ENCODE measurements at regions of chr2 and their contacts with region 1.

Region 1: GRCh38 chr2:176892676-176893226 is 319.8 kb upstream of the HNRNPA3 start:
- DNase-seq: no peak
- ATAC-seq: no peak
- H3K4me3 ChIP-seq: no peak overlapping the region
- H3K4me3 Mint-ChIP-seq: no peak overlapping the region
- H3K27ac ChIP-seq: no peak overlapping the region
- H3K27ac Mint-ChIP-seq: no peak overlapping the region
- H3K4me1 ChIP-seq: no peaks in the 10 kb centered on the region
- H3K4me1 Mint-ChIP-seq: no peaks in the 10 kb centered on the region
- H3K27me3 ChIP-seq: no peaks in the 10 kb centered on the region
- H3K27me3 Mint-ChIP-seq: peaks cover 0 to 7% of the 10 kb centered on the region in 2 donors
- CTCF ChIP-seq: no peak

Region 2: GRCh38 chr2:176398243-176399073 is 494.3 kb before region 1 on chr2:
- intact Hi-C with region 1: loop called (anchors 10 kb)
- DNase-seq: no peak
- ATAC-seq: no peak
- H3K4me3 ChIP-seq: no peak overlapping the region
- H3K4me3 Mint-ChIP-seq: no peak overlapping the region
- H3K27ac ChIP-seq: no peak overlapping the region
- H3K27ac Mint-ChIP-seq: no peak overlapping the region
- H3K4me1 ChIP-seq: no peaks in the 10 kb centered on the region
- H3K4me1 Mint-ChIP-seq: no peaks in the 10 kb centered on the region
- H3K27me3 ChIP-seq: no peaks in the 10 kb centered on the region
- H3K27me3 Mint-ChIP-seq: peaks cover 22 to 33% of the 10 kb centered on the region in 2 donors
- CTCF ChIP-seq: no peak